B cell (primary cell): ENCODE measurements at regions of chr1 and their contacts with region 1.

Region 1: GRCh38 chr1:53959664-53960250 is 13.6 kb downstream of the LRRC42 start:
- DNase-seq: peak; percentile 64
- ATAC-seq: peak; percentile 64
- H3K4me3 ChIP-seq: no peak overlapping the region
- H3K4me3 Mint-ChIP-seq: no peak overlapping the region
- H3K27ac ChIP-seq: no peak overlapping the region
- H3K27ac Mint-ChIP-seq: no peak overlapping the region
- H3K4me1 ChIP-seq: peaks cover 0 to 6% of the 10 kb centered on the region in 2 donors
- H3K4me1 Mint-ChIP-seq: no peaks in the 10 kb centered on the region
- H3K27me3 ChIP-seq: no peaks in the 10 kb centered on the region
- H3K27me3 Mint-ChIP-seq: no peaks in the 10 kb centered on the region
- CTCF ChIP-seq: peak; percentile 81

Region 2: DNA sequence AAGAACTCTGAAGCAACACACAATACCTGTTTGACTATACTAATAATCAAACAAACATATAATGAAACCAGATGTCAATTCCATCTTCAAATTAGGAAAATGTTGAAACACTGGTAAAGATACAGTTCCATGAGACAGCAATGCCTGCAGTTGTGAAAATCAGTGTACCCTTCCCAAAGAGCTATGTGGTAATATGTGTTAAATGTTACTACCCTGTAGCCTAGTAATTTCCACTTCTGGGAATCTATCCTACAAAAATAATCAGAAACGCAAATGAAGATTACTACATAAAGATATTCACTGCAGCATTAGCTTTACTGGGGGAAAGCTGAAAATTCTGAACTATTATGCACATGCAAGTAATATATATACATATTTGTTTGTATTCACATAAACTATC is 237.7 kb before region 1 on chr1:
- CTCF ChIA-PET with region 1: no interaction called
- POLR2A ChIA-PET with region 1: no interaction called
- intact Hi-C with region 1: no loop called
- DNase-seq: no peak
- ATAC-seq: no peak
- H3K4me3 ChIP-seq: no peak overlapping the region
- H3K4me3 Mint-ChIP-seq: no peak overlapping the region
- H3K27ac ChIP-seq: no peak overlapping the region
- H3K27ac Mint-ChIP-seq: no peak overlapping the region
- H3K4me1 ChIP-seq: no peaks in the 10 kb centered on the region
- H3K4me1 Mint-ChIP-seq: no peaks in the 10 kb centered on the region
- H3K27me3 ChIP-seq: peaks cover 0 to 3% (median 0%) of the 10 kb centered on the region in 4 experiments
- H3K27me3 Mint-ChIP-seq: peaks cover 14% of the 10 kb centered on the region
- CTCF ChIP-seq: no peak

Region 3: GRCh38 chr1:53860967-53861411 is 98.8 kb before region 1 on chr1:
- CTCF ChIA-PET with region 1: interaction called, 180 read pairs
- POLR2A ChIA-PET with region 1: no interaction called
- intact Hi-C with region 1: loop called (anchors 1 kb)
- DNase-seq: peak; percentile 70
- ATAC-seq: peak; percentile 62
- H3K4me3 ChIP-seq: no peak overlapping the region
- H3K4me3 Mint-ChIP-seq: no peak overlapping the region
- H3K27ac ChIP-seq: no peak overlapping the region
- H3K27ac Mint-ChIP-seq: no peak overlapping the region
- H3K4me1 ChIP-seq: peaks cover 10 to 15% of the 10 kb centered on the region in 2 donors
- H3K4me1 Mint-ChIP-seq: peaks cover 23% of the 10 kb centered on the region
- H3K27me3 ChIP-seq: no peaks in the 10 kb centered on the region
- H3K27me3 Mint-ChIP-seq: no peaks in the 10 kb centered on the region
- CTCF ChIP-seq: peak; percentile 90

Region 4: DNA sequence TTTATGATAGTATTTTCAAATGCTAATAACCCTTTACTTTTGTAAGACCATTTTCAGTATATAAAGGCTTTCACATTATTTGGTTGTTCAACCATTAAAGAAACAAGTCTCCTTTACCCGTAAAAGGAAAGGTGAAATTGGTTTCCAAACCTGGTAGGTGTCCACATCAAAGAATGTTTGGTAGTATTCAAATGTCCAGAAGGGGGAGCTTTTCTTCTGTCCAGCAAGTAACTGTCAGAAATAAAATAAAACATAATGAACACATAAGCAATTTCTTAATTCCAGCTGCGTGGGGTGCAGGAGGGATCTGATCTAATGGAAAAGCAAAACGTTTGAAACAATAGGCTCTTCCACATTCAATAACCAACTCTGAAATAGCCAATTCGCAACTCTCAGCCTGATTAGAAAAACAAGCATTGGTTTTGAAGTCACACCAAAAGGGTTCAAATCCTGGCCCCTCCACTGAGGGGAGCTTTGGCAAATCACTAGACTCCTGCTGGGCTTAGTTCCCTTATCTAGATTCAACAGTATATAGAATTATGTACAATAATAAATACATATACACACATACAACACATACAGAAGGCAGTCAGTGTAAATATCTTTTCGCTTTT is 81.2 kb before region 1 on chr1:
- CTCF ChIA-PET with region 1: interaction called, 35 read pairs
- POLR2A ChIA-PET with region 1: interaction called, 8 read pairs
- intact Hi-C with region 1: loop called (anchors 1 kb)
- DNase-seq: peak; percentile 44
- ATAC-seq: no peak
- H3K4me3 ChIP-seq: no peak overlapping the region
- H3K4me3 Mint-ChIP-seq: no peak overlapping the region
- H3K27ac ChIP-seq: no peak overlapping the region
- H3K27ac Mint-ChIP-seq: no peak overlapping the region
- H3K4me1 ChIP-seq: no peaks in the 10 kb centered on the region
- H3K4me1 Mint-ChIP-seq: no peaks in the 10 kb centered on the region
- H3K27me3 ChIP-seq: no peaks in the 10 kb centered on the region
- H3K27me3 Mint-ChIP-seq: no peaks in the 10 kb centered on the region
- CTCF ChIP-seq: peak; percentile 63

Region 5: GRCh38 chr1:53945433-53946251 is 14.1 kb before region 1 on chr1 and contains the start of gene IFT25:
- CTCF ChIA-PET with region 1: interaction called, 25 read pairs
- POLR2A ChIA-PET with region 1: interaction called, 7 read pairs
- intact Hi-C with region 1: no loop called
- DNase-seq: peak; percentile 98
- ATAC-seq: peak; percentile 79
- H3K4me3 ChIP-seq: peak within 1 kb of the TSS; percentile 65 to 95 (median 87)
- H3K4me3 Mint-ChIP-seq: peak within 1 kb of the TSS; percentile 99
- H3K27ac ChIP-seq: peak within 1 kb of the TSS; percentile 65 to 81
- H3K27ac Mint-ChIP-seq: peak within 1 kb of the TSS; percentile 96
- H3K4me1 ChIP-seq: peaks cover 16 to 20% of the 10 kb centered on the region in 2 donors
- H3K4me1 Mint-ChIP-seq: peaks cover 33% of the 10 kb centered on the region
- H3K27me3 ChIP-seq: no peaks in the 10 kb centered on the region
- H3K27me3 Mint-ChIP-seq: no peaks in the 10 kb centered on the region
- CTCF ChIP-seq: no peak
- total RNA-seq, gene IFT25: 45.7 and 48.1 TPM in 2 replicates

Region 6: GRCh38 chr1:54172614-54173599 is 213.2 kb after region 1 on chr1:
- CTCF ChIA-PET with region 1: no interaction called
- POLR2A ChIA-PET with region 1: no interaction called
- intact Hi-C with region 1: no loop called
- DNase-seq: no peak
- ATAC-seq: no peak
- H3K4me3 ChIP-seq: no peak overlapping the region
- H3K4me3 Mint-ChIP-seq: no peak overlapping the region
- H3K27ac ChIP-seq: no peak overlapping the region
- H3K27ac Mint-ChIP-seq: no peak overlapping the region
- H3K4me1 ChIP-seq: no peaks in the 10 kb centered on the region
- H3K4me1 Mint-ChIP-seq: no peaks in the 10 kb centered on the region
- H3K27me3 ChIP-seq: no peaks in the 10 kb centered on the region
- H3K27me3 Mint-ChIP-seq: no peaks in the 10 kb centered on the region
- CTCF ChIP-seq: no peak

Region 7: GRCh38 chr1:54810100-54810942 is 850.6 kb after region 1 on chr1:
- CTCF ChIA-PET with region 1: no interaction called
- POLR2A ChIA-PET with region 1: no interaction called
- intact Hi-C with region 1: loop called (anchors 5 kb)
- DNase-seq: peak; percentile 66
- ATAC-seq: peak; percentile 82
- H3K4me3 ChIP-seq: no peak overlapping the region
- H3K4me3 Mint-ChIP-seq: no peak overlapping the region
- H3K27ac ChIP-seq: no peak overlapping the region
- H3K27ac Mint-ChIP-seq: no peak overlapping the region
- H3K4me1 ChIP-seq: no peaks in the 10 kb centered on the region
- H3K4me1 Mint-ChIP-seq: no peaks in the 10 kb centered on the region
- H3K27me3 ChIP-seq: no peaks in the 10 kb centered on the region
- H3K27me3 Mint-ChIP-seq: no peaks in the 10 kb centered on the region
- CTCF ChIP-seq: peak; percentile 88